IMR-90 (cell line): ENCODE measurements at regions of chr3 and their contacts with region 1.

Region 1: DNA sequence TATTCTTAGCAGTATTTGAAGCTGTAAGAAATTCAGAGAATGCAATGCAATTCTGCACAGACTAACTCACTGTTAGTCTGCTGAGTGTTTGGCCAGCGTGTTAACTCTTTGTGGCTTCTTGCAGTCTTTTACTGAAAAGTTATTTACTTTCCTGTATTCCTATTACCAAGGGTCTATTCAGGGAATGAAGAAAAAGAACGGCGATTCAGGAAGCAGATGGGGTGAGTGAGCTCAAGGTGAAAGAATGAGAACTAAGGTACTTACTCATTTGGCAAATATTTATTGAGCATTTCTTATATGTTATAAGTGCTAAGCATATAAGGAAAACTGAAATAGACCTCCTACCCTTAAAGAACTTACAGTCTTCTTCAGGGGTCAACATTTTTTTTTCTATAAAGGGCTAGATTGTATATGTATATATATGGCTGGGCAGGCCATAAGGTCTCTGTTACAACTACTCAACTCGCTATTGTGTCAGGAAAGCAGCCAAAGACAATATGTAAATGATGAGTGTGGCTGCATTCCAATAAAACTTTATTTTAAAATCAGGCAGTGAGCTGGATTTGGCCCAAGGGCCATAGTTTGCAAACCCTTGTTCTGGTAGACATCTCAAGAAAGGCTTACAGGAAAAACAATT is 271.9 kb upstream of the GADL1 start:
- DNase-seq: peak; percentile 84
- ATAC-seq: peak; percentile 77
- H3K4me3 ChIP-seq: no peak overlapping the region
- H3K27ac ChIP-seq: no peak overlapping the region
- H3K4me1 ChIP-seq: peaks cover 14% of the 10 kb centered on the region
- H3K27me3 ChIP-seq: no peaks in the 10 kb centered on the region
- CTCF ChIP-seq: no peak
- POLR2A ChIP-seq: no peak
- RAD21 ChIP-seq: no peak

Region 2: DNA sequence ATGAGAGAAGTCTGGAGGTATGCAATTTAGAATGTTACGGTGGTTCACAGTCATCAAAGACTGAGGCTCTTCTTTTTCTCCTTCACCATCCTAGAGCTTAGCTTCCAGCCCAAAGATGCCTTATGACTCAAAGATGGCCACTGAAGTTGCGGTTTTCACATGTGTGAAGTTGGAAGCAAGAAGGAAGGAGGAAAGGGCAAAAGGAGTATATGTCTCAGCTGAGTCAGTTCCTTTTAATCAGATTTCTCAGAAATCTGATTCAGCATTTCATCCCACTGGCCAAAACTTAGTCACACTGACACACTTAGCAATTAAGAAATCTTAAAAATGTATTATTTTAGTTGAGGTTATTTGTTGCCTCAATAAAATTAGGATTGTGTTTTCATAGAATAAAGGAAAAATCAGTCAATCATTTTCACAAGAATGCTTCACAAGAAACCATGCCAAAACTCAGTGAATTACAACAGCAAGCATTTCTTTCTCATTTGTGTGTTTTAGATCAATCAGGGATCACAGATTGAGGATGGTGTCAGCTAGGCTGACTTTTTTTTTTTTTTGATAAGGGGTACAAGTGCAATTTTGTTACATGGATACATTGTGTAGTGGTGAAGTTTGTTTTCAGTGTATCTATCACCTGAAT is 60.8 kb before region 1 on chr3:
- CTCF ChIA-PET with region 1: no interaction called
- POLR2A ChIA-PET with region 1: no interaction called
- dilution Hi-C with region 1: no loop called
- in situ Hi-C with region 1: no loop called
- intact Hi-C with region 1: loop called (anchors 10 kb)
- DNase-seq: peak; percentile 95
- ATAC-seq: peak; percentile 90
- H3K4me3 ChIP-seq: no peak overlapping the region
- H3K27ac ChIP-seq: no peak overlapping the region
- H3K4me1 ChIP-seq: peaks cover 3% of the 10 kb centered on the region; the same call in 1 of the 2 replicates
- H3K27me3 ChIP-seq: no peaks in the 10 kb centered on the region; the same call in 1 of the 2 replicates
- CTCF ChIP-seq: no peak
- POLR2A ChIP-seq: no peak
- RAD21 ChIP-seq: no peak

Region 3: DNA sequence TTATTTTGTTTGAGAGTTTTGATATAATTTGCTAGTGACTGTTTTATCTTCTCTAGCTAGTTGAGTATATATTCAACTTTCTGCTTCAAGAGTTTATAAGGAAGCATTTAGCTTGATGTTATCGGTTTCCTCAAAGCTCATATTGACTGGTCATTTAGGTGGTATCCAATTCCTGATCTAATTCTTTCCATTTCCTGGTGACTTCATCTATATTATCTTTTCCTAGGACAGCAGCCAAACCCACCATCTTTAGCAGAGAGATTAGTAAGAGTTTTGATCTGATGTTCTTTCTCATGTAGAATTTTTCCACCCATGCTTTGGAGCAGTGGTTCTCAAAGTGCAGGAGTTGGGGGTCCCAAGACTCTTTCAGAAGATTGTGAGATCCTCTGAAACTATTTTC is 217.8 kb after region 1 on chr3:
- CTCF ChIA-PET with region 1: no interaction called
- POLR2A ChIA-PET with region 1: no interaction called
- dilution Hi-C with region 1: no loop called
- in situ Hi-C with region 1: no loop called
- intact Hi-C with region 1: no loop called
- DNase-seq: no peak
- ATAC-seq: no peak
- H3K4me3 ChIP-seq: no peak overlapping the region
- H3K27ac ChIP-seq: no peak overlapping the region
- H3K4me1 ChIP-seq: no peaks in the 10 kb centered on the region
- H3K27me3 ChIP-seq: no peaks in the 10 kb centered on the region
- CTCF ChIP-seq: no peak
- POLR2A ChIP-seq: no peak
- RAD21 ChIP-seq: no peak